Calu3 (cell line): ENCODE measurements at regions of chr16 and their contacts with region 1.

Region 1: DNA sequence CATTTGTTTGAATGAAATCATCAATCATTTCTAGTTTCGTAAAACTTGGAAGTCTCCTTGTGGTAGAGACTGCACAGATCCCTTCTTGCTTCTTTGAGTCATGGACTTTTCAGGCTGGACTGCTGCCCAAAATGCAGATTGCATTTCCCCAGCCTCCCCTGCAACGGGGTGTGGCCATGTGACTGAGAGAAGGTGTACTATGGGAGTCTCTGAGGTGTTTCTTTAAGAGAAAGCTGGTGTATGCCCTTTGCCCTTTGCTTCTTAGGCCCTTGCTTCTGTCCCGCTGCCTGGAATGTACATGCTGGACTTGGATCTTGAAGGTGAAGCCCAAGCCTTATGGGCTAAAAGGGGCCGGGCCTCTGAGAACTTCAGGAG is 51.6 kb downstream of the FTO start:
- DNase-seq: peak; percentile 80
- H3K4me3 Mint-ChIP-seq: peak overlapping the region; percentile 45
- H3K27ac Mint-ChIP-seq: peak overlapping the region; percentile 85
- H3K4me1 Mint-ChIP-seq: peaks cover 63% of the 10 kb centered on the region
- H3K27me3 Mint-ChIP-seq: no peaks in the 10 kb centered on the region
- CTCF ChIP-seq: no peak

Region 2: GRCh38 chr16:53509906-53510703 is 245.4 kb before region 1 on chr16:
- CTCF ChIA-PET with region 1: interaction called, 10 read pairs
- intact Hi-C with region 1: no loop called
- DNase-seq: peak; percentile 65
- H3K4me3 Mint-ChIP-seq: no peak overlapping the region
- H3K27ac Mint-ChIP-seq: no peak overlapping the region
- H3K4me1 Mint-ChIP-seq: peaks cover 19% of the 10 kb centered on the region
- H3K27me3 Mint-ChIP-seq: no peaks in the 10 kb centered on the region
- CTCF ChIP-seq: peak; percentile 87

Region 3: DNA sequence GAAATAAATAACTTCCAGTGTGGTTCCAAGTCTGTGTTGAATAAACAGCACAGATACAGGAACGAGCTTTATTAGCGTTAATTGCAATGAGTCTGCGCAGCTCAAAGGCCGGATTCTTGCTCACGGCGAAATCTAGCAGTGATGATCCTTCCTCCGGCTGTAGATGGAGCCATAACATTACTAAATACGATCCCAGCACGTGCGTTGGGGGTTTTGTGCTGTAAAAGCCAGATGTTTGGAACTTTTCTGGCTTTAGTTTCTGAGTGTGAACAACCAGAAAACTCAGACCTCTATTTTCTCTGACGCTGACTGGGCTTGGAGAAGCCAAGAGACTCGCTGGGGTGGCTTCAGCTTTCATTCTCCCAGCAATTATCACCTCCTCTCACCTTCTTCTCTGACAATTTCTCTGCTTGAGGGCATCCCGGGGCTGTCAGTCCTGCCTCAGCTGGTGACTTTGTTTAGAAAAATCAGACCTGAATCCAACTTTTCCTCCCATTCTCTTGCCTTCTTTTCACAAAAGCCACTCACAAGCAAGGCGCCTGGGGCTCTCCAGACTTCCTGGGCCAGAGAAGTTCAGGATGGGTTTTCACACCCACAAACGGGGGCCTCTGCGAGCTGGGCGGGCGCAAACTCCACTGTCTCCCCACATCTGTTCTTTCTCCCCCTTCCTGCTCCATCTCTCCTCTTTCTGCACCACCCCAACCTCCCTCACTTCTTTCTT is 205.4 kb before region 1 on chr16:
- CTCF ChIA-PET with region 1: interaction called, 7 read pairs
- intact Hi-C with region 1: loop called (anchors 5 kb)
- DNase-seq: peak; percentile 57
- H3K4me3 Mint-ChIP-seq: no peak overlapping the region
- H3K27ac Mint-ChIP-seq: no peak overlapping the region
- H3K4me1 Mint-ChIP-seq: peaks cover 7% of the 10 kb centered on the region
- H3K27me3 Mint-ChIP-seq: peaks cover 85% of the 10 kb centered on the region
- CTCF ChIP-seq: peak; percentile 63

Region 4: DNA sequence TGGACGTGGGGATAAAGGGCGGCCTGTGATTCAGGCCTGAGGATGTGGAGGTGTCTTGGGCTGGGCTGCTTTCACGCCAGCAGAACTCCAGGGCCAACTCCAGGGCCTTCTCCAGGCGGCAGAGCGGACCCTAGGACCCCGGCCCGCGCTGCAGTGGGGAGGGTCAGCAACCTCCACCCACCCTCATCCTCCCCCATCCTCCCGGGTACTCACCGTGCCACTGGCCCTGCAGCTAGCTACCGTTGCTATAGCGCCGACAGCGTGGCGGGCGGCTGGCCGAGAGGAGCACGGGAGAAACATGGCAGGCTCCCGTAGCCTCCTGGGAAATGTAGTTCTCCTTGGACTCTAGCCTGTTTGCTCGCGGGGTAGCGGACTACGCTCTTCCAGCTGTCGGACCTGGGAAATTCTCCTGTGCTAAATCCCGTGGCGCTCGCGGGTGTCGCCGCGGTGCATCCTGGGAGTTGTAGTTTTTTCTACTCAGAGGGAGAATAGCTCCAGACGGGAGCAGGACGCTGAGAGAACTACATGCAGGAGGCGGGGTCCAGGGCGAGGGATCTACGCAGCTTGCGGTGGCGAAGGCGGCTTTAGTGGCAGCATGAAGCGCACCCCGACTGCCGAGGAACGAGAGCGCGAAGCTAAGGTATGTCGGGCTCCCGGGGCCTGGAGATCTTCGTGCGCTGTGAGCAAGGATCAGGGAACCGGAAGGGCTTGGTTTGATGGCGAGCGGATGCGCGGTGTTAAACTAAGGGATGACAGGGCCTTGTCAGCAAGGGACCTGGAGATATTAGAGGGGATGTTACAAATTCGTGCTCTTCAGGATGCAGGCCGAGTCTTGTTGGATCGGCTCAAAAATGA is 51.7 kb before region 1 on chr16 and contains the starts of genes FTO and RPGRIP1L:
- CTCF ChIA-PET with region 1: interaction called, 4 read pairs
- intact Hi-C with region 1: loop called (anchors 5 kb)
- DNase-seq: peak; percentile 99
- H3K4me3 Mint-ChIP-seq: peak within 1 kb of the TSS; percentile 84
- H3K27ac Mint-ChIP-seq: peak within 1 kb of the TSS; percentile 37
- H3K4me1 Mint-ChIP-seq: peaks cover 11% of the 10 kb centered on the region
- H3K27me3 Mint-ChIP-seq: no peaks in the 10 kb centered on the region
- CTCF ChIP-seq: no peak
- total RNA-seq, gene FTO: 67.2 and 68.9 TPM in 2 replicates
- total RNA-seq, gene RPGRIP1L: 16.6 and 18.9 TPM in 2 replicates

Region 5: DNA sequence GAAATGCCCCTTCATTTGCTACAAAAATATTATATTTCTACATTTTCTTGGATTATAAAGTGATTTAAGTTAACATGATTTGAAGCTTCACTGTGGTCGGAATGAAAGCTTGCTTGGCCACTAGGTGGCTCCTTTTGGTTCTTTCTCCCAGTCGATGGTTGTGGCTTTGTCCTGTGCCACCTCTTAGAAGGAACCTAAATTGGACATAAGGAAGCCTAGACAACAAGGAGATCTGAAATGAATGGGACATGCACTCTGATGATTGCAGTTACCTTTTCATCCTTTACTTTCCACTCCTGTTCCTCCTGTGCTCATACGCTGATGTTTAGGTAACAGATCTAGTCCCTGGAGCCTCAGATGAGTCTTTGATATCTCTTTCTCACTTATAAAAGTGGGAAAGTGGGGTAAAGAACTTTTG is 12.4 kb before region 1 on chr16:
- CTCF ChIA-PET with region 1: interaction called, 70 read pairs
- intact Hi-C with region 1: loop called (anchors 2 kb)
- DNase-seq: peak; percentile 54
- H3K4me3 Mint-ChIP-seq: no peak overlapping the region
- H3K27ac Mint-ChIP-seq: no peak overlapping the region
- H3K4me1 Mint-ChIP-seq: peaks cover 65% of the 10 kb centered on the region
- H3K27me3 Mint-ChIP-seq: no peaks in the 10 kb centered on the region
- CTCF ChIP-seq: peak; percentile 66

Region 6: GRCh38 chr16:53840456-53840855 is 84.9 kb after region 1 on chr16:
- CTCF ChIA-PET with region 1: no interaction called
- intact Hi-C with region 1: no loop called
- DNase-seq: no peak
- H3K4me3 Mint-ChIP-seq: no peak overlapping the region
- H3K27ac Mint-ChIP-seq: no peak overlapping the region
- H3K4me1 Mint-ChIP-seq: no peaks in the 10 kb centered on the region
- H3K27me3 Mint-ChIP-seq: no peaks in the 10 kb centered on the region
- CTCF ChIP-seq: no peak

Region 7: GRCh38 chr16:53852678-53853077 is 97.2 kb after region 1 on chr16:
- CTCF ChIA-PET with region 1: no interaction called
- intact Hi-C with region 1: no loop called
- DNase-seq: no peak
- H3K4me3 Mint-ChIP-seq: no peak overlapping the region
- H3K27ac Mint-ChIP-seq: no peak overlapping the region
- H3K4me1 Mint-ChIP-seq: no peaks in the 10 kb centered on the region
- H3K27me3 Mint-ChIP-seq: no peaks in the 10 kb centered on the region
- CTCF ChIP-seq: no peak